Endothelial cell of umbilical vein (primary cell): ENCODE measurements at regions of chr1 and their contacts with region 1.

Region 1: GRCh38 chr1:10378081-10378841 is 20.6 kb upstream of the PGD start:
- DNase-seq: peak; percentile 44
- H3K4me3 ChIP-seq: no peak overlapping the region
- H3K27ac ChIP-seq: peak overlapping the region; percentile 51
- H3K4me1 ChIP-seq: peaks cover 3% of the 10 kb centered on the region
- H3K27me3 ChIP-seq: no peaks in the 10 kb centered on the region
- CTCF ChIP-seq: no peak
- POLR2A ChIP-seq: no peak

Region 2: DNA sequence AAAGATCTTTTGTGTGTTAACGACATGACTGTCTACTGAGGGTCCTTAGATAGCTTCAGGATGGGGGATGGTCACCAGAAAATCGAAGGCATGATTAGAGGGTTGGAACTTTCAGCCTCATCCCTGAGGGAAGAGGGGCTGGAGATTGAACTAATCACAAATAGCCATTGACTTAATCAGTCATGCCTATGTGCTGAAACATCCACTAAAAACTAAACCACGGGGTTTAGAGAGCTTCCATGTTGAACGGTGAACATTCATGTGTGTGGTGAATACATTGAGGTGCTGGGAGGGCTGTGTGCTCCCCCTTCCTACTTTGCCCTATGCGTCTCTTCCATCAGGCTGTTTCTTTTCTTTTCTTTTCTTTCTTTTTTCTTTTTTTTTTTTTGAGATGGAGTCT is 364.2 kb before region 1 on chr1:
- CTCF ChIA-PET with region 1: no interaction called
- POLR2A ChIA-PET with region 1: no interaction called
- dilution Hi-C with region 1: no loop called
- intact Hi-C with region 1: no loop called
- DNase-seq: no peak
- H3K4me3 ChIP-seq: no peak overlapping the region
- H3K27ac ChIP-seq: no peak overlapping the region
- H3K4me1 ChIP-seq: no peaks in the 10 kb centered on the region
- H3K27me3 ChIP-seq: peaks cover 0 to 4% of the 10 kb centered on the region in 2 experiments
- CTCF ChIP-seq: no peak
- POLR2A ChIP-seq: no peak

Region 3: DNA sequence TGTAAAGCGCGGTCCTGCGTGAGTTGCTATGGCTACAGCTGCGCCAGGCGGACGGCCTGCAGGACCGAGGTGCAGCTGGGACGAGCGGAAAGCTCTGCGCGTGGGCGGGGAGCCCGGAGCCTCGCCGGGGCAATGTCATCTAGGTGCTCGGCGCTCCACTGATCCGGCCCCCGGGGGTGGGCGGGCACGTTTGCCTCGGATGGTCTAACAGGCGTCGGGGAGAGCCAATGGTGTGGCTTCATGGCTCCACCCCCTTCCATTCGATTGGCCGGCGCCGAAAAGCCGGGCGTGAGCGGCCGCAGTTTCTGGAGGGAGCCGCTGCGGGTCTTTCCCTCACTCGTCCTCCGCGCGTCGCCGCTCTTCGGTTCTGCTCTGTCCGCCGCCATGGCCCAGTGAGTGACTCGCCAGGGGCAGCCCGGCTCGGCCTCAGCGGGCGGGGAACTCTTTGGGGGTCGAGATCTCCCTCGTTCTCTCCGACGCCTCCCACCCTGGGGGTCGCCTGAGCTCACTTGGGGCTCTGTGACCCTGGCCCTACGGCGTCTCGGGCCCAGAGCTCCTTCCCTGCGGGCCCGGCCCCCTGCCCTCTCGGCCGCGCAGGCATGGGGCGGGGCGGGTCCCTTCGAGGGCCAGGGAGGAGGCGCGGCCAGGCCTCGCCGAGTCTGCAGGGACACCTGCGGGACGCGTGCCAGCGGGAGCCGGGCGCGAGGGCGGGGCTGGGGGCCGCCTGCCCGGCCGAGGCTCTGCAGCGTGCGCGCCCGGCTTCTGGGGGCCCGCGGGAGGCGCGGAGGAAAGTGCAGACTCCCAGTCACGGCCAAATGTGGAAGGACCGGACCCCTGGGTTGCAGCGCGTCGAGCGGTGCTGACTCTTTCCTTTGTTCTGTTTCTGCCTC is 20.7 kb after region 1 on chr1 and contains the start of gene PGD:
- CTCF ChIA-PET with region 1: interaction called, 22 read pairs
- POLR2A ChIA-PET with region 1: interaction called, 6 read pairs
- dilution Hi-C with region 1: no loop called
- intact Hi-C with region 1: loop called (anchors 1 kb)
- DNase-seq: peak; percentile 98
- H3K4me3 ChIP-seq: peak within 1 kb of the TSS; percentile 67 to 96 (median 95)
- H3K27ac ChIP-seq: peak within 1 kb of the TSS; percentile 76
- H3K4me1 ChIP-seq: peaks cover 35% of the 10 kb centered on the region
- H3K27me3 ChIP-seq: no peaks in the 10 kb centered on the region
- CTCF ChIP-seq: no peak
- POLR2A ChIP-seq: peak; percentile 87
- total RNA-seq, gene PGD: 303 and 307 TPM in 2 replicates

Region 4: GRCh38 chr1:10415211-10415930 is 37.1 kb after region 1 on chr1:
- CTCF ChIA-PET with region 1: interaction called, 21 read pairs
- POLR2A ChIA-PET with region 1: interaction called, 3 read pairs
- dilution Hi-C with region 1: no loop called
- intact Hi-C with region 1: no loop called
- DNase-seq: peak; percentile 84
- H3K4me3 ChIP-seq: no peak overlapping the region
- H3K27ac ChIP-seq: peak overlapping the region; percentile 92
- H3K4me1 ChIP-seq: peaks cover 17% of the 10 kb centered on the region
- H3K27me3 ChIP-seq: no peaks in the 10 kb centered on the region
- CTCF ChIP-seq: no peak
- POLR2A ChIP-seq: peak; percentile 40

Region 5: DNA sequence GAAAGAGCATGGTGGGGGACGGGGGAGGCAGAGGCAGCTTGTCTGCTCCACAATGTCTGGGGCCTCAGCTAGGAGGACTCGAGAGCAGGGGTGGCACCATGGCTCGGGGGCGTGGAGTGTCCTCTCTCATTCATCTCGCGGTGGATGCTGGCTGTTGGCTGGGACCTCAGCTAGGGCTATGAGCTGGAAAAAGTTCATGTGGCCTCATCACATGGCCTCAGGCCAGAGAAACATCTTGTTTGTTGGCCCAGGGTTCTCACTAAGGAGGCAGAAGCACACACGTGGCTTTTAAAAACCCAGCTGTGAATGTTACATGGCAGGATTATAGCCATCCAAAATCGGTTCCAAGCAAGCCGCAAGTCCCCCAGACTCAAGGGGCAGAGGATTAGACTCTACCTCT is 45.8 kb after region 1 on chr1:
- CTCF ChIA-PET with region 1: interaction called, 58 read pairs
- POLR2A ChIA-PET with region 1: interaction called, 6 read pairs
- dilution Hi-C with region 1: no loop called
- intact Hi-C with region 1: loop called (anchors 1 kb)
- DNase-seq: no peak
- H3K4me3 ChIP-seq: no peak overlapping the region
- H3K27ac ChIP-seq: no peak overlapping the region
- H3K4me1 ChIP-seq: no peaks in the 10 kb centered on the region
- H3K27me3 ChIP-seq: no peaks in the 10 kb centered on the region
- CTCF ChIP-seq: no peak
- POLR2A ChIP-seq: no peak